Activated CD8-positive, alpha-beta T cell treated with anti-CD3 and anti-CD28 coated beads for 36 hours (primary cell): ENCODE measurements at regions of chr12 and their contacts with region 1.

Region 1: GRCh38 chr12:50174971-50175715 is 8.0 kb upstream of the CERS5 start:
- DNase-seq: no peak
- ATAC-seq: no peak
- H3K4me3 Mint-ChIP-seq: no peak overlapping the region
- H3K27ac Mint-ChIP-seq: no peak overlapping the region
- H3K4me1 Mint-ChIP-seq: peaks cover 2% of the 10 kb centered on the region
- H3K27me3 Mint-ChIP-seq: no peaks in the 10 kb centered on the region
- CTCF ChIP-seq: peak; percentile 97

Region 2: DNA sequence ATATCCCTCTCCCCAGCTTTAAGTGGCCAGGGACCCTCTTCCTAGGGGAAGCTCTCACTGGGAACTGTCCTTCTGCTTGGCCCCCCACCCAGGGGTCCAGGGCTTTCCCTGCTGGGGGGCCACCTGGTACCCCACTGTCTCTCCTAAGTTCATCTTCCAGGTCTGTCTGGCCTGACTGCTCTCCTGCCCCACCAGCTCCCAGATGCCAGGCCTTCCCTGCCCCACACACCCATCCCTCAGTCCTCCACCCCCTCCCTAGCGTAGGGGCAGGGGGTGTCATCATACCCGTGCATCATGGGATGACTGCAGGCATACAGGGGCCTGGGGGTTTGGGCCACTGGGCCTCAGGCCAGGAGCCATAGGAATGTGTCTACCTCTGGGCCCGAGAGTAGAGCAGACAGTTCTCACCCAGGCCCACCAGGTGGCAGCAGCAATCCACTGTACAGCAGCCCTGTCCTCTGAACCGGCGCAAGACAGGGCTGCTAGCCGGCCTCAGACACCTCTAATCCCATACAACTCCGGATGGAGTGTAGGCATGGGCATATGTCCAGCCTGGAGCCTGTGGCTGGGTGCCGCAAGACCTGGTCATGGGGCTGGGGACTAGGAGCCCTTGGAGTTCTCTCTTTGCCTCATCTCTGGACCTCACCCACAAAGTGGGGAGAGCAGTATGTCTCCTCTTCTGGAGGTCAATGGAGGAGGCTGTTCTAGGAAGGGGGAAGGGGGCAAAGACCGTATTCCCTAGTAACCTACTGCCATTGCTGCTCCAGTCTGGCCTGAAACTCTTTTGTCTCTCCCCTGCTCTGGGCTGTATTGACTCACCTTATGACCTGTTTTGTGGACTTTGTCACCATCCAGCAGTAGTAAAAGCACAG is 100.0 kb before region 1 on chr12:
- CTCF ChIA-PET with region 1: interaction called, 15 read pairs
- POLR2A ChIA-PET with region 1: no interaction called
- intact Hi-C with region 1: no loop called
- DNase-seq: peak; percentile 86
- ATAC-seq: peak; percentile 99
- H3K4me3 Mint-ChIP-seq: no peak overlapping the region
- H3K27ac Mint-ChIP-seq: no peak overlapping the region
- H3K4me1 Mint-ChIP-seq: peaks cover 4% of the 10 kb centered on the region
- H3K27me3 Mint-ChIP-seq: no peaks in the 10 kb centered on the region
- CTCF ChIP-seq: peak; percentile 91

Region 3: GRCh38 chr12:50127546-50127945 is 47.6 kb before region 1 on chr12:
- CTCF ChIA-PET with region 1: interaction called, 24 read pairs
- POLR2A ChIA-PET with region 1: no interaction called
- intact Hi-C with region 1: no loop called
- DNase-seq: no peak
- ATAC-seq: no peak
- H3K4me3 Mint-ChIP-seq: no peak overlapping the region
- H3K27ac Mint-ChIP-seq: peak overlapping the region; percentile 16
- H3K4me1 Mint-ChIP-seq: peaks cover 12% of the 10 kb centered on the region
- H3K27me3 Mint-ChIP-seq: no peaks in the 10 kb centered on the region
- CTCF ChIP-seq: no peak

Region 4: GRCh38 chr12:50162230-50162629 is 12.9 kb before region 1 on chr12:
- CTCF ChIA-PET with region 1: interaction called, 22 read pairs
- POLR2A ChIA-PET with region 1: no interaction called
- intact Hi-C with region 1: no loop called
- DNase-seq: no peak
- ATAC-seq: no peak
- H3K4me3 Mint-ChIP-seq: no peak overlapping the region
- H3K27ac Mint-ChIP-seq: peak overlapping the region; percentile 13
- H3K4me1 Mint-ChIP-seq: peaks cover 39% of the 10 kb centered on the region
- H3K27me3 Mint-ChIP-seq: no peaks in the 10 kb centered on the region
- CTCF ChIP-seq: no peak

Region 5: DNA sequence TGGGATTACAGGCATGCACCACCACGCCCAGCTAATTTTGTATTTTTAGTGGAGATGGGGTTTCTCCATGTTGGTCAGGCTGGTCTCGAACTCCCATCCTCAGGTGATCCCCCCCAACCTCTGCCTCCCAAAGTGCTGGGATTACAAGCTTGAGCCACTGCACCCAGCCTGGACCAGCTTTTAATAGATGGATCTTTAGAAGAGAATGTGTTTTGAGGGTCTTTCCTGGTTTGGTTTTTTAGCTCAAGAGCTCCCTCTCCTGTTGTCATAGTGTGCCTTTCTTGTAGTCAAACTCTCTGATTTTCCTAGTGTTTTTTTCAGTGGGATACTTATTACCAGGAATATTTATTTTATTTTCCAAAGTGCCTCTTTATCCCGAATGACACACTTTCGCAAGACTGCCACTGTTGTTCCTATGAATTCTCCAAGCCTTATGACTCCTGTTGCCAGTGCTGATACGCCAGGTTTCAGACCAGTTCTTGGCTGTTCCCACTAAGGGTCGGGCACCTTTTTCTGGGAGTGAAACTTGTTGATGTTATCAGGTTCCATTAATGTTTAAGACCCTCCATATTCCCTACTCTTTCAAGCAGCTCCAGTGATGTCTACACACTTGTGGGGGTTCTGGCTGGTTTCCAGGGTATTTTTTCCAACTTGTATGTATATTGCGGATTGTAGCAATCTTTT is 139.6 kb after region 1 on chr12:
- CTCF ChIA-PET with region 1: interaction called, 16 read pairs
- POLR2A ChIA-PET with region 1: no interaction called
- intact Hi-C with region 1: loop called (anchors 10 kb)
- DNase-seq: no peak
- ATAC-seq: no peak
- H3K4me3 Mint-ChIP-seq: no peak overlapping the region
- H3K27ac Mint-ChIP-seq: no peak overlapping the region
- H3K4me1 Mint-ChIP-seq: peaks cover 2% of the 10 kb centered on the region
- H3K27me3 Mint-ChIP-seq: no peaks in the 10 kb centered on the region
- CTCF ChIP-seq: peak; percentile 70